SK-N-SH (cell line): ENCODE measurements at regions of chr4 and their contacts with region 1.

Region 1: DNA sequence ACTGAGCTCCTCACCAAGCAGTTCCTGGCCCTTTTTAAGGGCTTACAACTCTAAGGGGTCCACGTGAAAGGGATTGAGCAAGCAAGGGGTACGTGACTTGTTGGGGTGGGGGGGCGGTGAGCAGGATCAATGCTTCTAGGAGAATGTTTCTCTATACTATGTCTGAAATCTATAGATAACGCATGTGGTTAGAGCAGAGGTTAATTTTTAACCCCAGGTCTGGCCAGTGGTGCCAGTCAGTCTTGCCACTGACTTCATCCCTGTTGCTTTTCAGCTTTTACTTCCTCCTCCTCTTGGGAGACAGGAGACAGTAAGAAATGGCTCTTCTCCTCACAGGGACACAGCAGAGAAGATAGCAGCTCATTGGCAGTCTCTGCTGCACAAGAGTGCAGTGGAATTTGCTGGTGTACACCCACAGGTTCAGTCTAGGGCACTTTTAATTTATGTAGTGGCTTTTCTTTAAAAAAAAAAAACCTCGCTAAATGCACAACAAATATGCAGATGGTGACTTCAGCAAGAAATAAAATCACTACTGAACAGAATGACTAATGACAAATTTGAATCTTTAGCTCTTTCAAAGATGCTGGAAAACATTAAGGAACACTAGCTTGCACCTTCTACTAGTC is 190.4 kb downstream of the CCNG2 start:
- DNase-seq: no peak
- H3K4me3 ChIP-seq: no peak overlapping the region
- H3K27ac ChIP-seq: no peak overlapping the region
- H3K4me1 ChIP-seq: no peaks in the 10 kb centered on the region
- H3K27me3 ChIP-seq: no peaks in the 10 kb centered on the region
- CTCF ChIP-seq: no peak
- EP300 ChIP-seq: no peak
- RAD21 ChIP-seq: no peak

Region 2: GRCh38 chr4:77282305-77282704 is 65.1 kb before region 1 on chr4:
- CTCF ChIA-PET with region 1: no interaction called
- POLR2A ChIA-PET with region 1: no interaction called
- DNase-seq: no peak
- H3K4me3 ChIP-seq: no peak overlapping the region
- H3K27ac ChIP-seq: no peak overlapping the region
- H3K4me1 ChIP-seq: no peaks in the 10 kb centered on the region
- H3K27me3 ChIP-seq: no peaks in the 10 kb centered on the region
- CTCF ChIP-seq: no peak
- EP300 ChIP-seq: no peak
- RAD21 ChIP-seq: no peak

Region 3: DNA sequence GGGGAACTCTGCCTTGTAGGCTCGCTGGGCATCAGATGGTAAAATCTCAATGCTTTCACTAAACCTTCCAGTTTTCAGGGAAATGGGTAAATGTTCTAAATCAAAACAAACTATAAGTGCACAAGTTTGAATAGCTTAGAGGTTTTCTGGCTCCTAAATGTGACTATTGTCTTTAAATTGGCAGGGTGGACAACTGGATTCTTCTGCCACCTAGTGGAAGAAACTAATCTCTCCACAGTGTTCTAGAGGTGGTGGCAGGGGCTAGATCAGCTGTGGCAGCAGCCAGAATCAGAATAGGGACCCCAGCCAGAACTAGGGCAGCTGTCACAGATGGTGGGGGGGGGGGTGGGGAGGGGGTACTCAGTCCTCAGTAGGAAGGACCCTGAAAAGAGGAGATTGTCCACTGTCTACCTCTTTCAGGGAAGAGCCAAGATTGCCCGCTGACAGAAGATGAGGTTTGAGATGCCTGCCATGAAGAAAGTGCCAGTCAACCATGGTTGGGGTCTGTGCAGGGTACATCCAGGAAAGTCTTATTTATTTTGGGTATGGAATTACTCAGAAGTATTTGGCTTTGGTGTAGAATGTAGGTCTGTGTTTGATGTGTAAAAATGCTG is 11.0 kb after region 1 on chr4:
- CTCF ChIA-PET with region 1: interaction called, 27 read pairs
- POLR2A ChIA-PET with region 1: no interaction called
- DNase-seq: peak; percentile 42
- H3K4me3 ChIP-seq: no peak overlapping the region
- H3K27ac ChIP-seq: no peak overlapping the region
- H3K4me1 ChIP-seq: no peaks in the 10 kb centered on the region
- H3K27me3 ChIP-seq: peaks cover 13% of the 10 kb centered on the region; the same call in 1 of the 2 replicates
- CTCF ChIP-seq: peak; percentile 67
- EP300 ChIP-seq: no peak
- RAD21 ChIP-seq: peak; percentile 62

Region 4: DNA sequence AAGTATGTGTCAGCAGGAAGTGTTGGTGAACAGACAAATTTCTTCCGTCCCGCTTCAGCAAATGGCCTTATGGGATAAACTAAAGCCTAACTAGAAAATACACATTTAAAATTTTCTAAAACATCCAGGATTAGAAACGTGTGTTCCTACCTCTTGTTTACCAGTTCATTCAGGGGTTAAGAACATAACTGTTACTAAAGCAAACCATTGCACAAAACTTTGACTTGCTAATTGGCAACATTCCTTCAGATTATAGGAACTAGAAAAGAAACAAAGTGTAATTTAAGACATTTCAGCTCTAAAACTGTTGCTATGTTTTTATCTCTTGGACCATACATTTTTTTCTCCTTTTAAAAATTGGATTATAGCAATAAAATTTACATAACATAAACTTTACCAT is 218.7 kb after region 1 on chr4:
- CTCF ChIA-PET with region 1: no interaction called
- POLR2A ChIA-PET with region 1: no interaction called
- DNase-seq: no peak
- H3K4me3 ChIP-seq: no peak overlapping the region
- H3K27ac ChIP-seq: no peak overlapping the region
- H3K4me1 ChIP-seq: no peaks in the 10 kb centered on the region
- H3K27me3 ChIP-seq: no peaks in the 10 kb centered on the region
- CTCF ChIP-seq: no peak
- EP300 ChIP-seq: no peak
- RAD21 ChIP-seq: no peak